Heart left ventricle (tissue), 16 donors: ENCODE measurements at regions of chr2 and their contacts with region 1.

Region 1: GRCh38 chr2:200993097-200993496 is 29.6 kb upstream of the ORC2 start:
- DNase-seq: no peak
- ATAC-seq: no peak
- H3K4me3 ChIP-seq: no peak overlapping the region
- H3K27ac ChIP-seq: no peak overlapping the region
- H3K4me1 ChIP-seq: no peaks in the 10 kb centered on the region
- H3K27me3 ChIP-seq: no peaks in the 10 kb centered on the region
- CTCF ChIP-seq: no peak
- POLR2A ChIP-seq: no peak

Region 2: DNA sequence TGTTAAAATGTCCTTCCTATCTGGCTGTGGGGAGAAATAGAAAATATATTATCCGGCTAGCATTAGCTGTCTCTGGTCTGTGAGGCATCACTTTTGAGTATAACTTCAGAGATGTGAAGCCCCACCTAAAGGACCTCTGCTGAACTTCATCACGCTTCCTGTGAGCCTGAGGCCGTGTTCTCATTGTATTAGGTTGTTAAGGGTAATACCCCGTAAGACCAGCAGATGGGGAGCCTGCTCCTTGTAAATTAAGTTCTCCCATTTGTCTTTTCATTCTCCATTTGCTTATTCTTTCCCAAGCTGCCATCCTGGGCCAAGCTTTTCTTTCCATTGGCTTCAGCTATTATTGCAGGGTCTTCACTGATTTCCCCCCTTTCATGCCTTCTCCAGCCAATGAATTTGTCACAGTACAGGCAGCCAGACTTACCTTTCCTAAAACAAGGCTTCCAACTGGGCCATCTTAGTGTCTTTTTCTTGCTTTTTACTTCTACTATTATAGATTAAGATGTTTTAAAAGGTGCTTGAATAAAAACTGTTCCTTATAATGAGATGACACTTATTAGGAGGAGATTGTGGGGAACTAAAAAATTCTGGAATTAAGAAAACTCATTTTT is 91.5 kb before region 1 on chr2:
- intact Hi-C with region 1: no loop called
- DNase-seq: peak in 3 of 5 donors; percentile 43 to 67 (median 56)
- ATAC-seq: peak; percentile 61 to 88 (median 84)
- H3K4me3 ChIP-seq: no peak overlapping the region
- H3K27ac ChIP-seq: peak overlapping the region in 1 of 12 donors; percentile 9
- H3K4me1 ChIP-seq: peaks cover 0 to 21% (median 2%) of the 10 kb centered on the region in 12 donors
- H3K27me3 ChIP-seq: no peaks in the 10 kb centered on the region
- CTCF ChIP-seq: peak; percentile 61 to 82 (median 76)
- POLR2A ChIP-seq: no peak

Region 3: GRCh38 chr2:200929334-200930249 is 63.5 kb before region 1 on chr2:
- intact Hi-C with region 1: loop called in 1 of 10 experiments (anchors 10 kb)
- DNase-seq: no peak
- ATAC-seq: no peak
- H3K4me3 ChIP-seq: no peak overlapping the region
- H3K27ac ChIP-seq: no peak overlapping the region
- H3K4me1 ChIP-seq: no peaks in the 10 kb centered on the region
- H3K27me3 ChIP-seq: no peaks in the 10 kb centered on the region
- CTCF ChIP-seq: no peak
- POLR2A ChIP-seq: no peak

Region 4: GRCh38 chr2:201057087-201057521 is 64.0 kb after region 1 on chr2:
- intact Hi-C with region 1: loop called in 1 of 10 experiments (anchors 10 kb)
- DNase-seq: no peak
- ATAC-seq: peak in 1 of 4 donors; percentile 14
- H3K4me3 ChIP-seq: no peak overlapping the region
- H3K27ac ChIP-seq: peak overlapping the region in 2 of 12 donors; percentile 16 to 47
- H3K4me1 ChIP-seq: peaks cover 0 to 52% (median 17%) of the 10 kb centered on the region in 12 donors
- H3K27me3 ChIP-seq: no peaks in the 10 kb centered on the region
- CTCF ChIP-seq: no peak
- POLR2A ChIP-seq: no peak

Region 5: DNA sequence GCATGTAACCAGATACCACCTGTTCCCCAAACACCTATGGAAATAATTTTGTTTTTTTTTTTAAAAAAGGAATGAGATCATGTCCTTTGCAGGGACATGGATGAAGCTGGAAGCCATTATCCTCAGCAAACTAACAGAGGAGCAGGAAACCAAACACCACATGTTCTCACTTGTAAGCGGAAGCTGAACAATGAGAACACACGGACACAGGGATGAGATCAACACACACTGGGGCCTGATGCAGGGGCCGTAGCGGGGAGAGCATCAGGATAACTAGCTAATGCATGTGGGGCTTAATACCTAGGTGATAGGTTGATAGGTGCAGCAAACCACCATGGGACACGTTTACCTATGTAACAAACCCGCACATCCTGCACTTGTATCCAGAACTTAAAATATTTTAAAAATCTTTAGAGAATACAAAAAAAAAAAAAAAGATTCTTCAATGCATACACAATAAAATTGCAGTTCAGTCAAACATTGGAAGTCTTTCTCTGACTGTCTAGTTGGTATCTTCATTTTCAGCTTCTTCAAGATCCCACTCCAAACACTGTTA is 178.2 kb after region 1 on chr2:
- intact Hi-C with region 1: loop called in 1 of 10 experiments (anchors 10 kb)
- DNase-seq: no peak
- ATAC-seq: peak in 1 of 4 donors; percentile 19
- H3K4me3 ChIP-seq: no peak overlapping the region
- H3K27ac ChIP-seq: no peak overlapping the region
- H3K4me1 ChIP-seq: peaks cover 0 to 12% (median 0%) of the 10 kb centered on the region in 12 donors
- H3K27me3 ChIP-seq: no peaks in the 10 kb centered on the region
- CTCF ChIP-seq: no peak
- POLR2A ChIP-seq: no peak